ENCODE measurements at regions of chrX and their contacts with region 1.

Region 1: GRCh38 chrX:124211312-124211942 is 121.0 kb upstream of the TEX13D start:
- DNase-seq: peak; percentile 27
- H3K4me3 Mint-ChIP-seq: no peak overlapping the region
- H3K27ac Mint-ChIP-seq: no peak overlapping the region
- H3K4me1 Mint-ChIP-seq: peaks cover 38% of the 10 kb centered on the region
- H3K27me3 Mint-ChIP-seq: no peaks in the 10 kb centered on the region

Region 2: DNA sequence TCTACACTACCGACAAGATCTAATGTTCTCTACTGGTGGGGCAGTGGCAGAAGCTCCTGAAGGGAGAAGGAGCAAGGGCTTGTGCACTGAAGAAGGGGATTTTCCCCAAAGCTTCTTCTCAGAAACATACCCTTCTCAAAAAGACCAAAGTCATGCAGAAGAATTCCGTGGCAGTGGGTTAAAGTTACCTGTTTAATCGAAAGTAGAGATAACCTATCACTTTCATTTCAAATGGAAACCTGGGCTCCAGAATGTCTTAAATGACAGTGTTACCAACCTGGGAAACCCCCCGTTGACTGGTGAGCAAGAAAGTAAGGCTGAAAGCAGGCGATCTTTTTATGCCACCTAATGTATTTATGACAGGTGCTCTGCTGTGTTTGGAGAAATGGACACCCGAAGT is 28.5 kb after region 1 on chrX:
- CTCF ChIA-PET with region 1: interaction called, 7 read pairs
- intact Hi-C with region 1: loop called (anchors 1 kb)
- DNase-seq: peak; percentile 72
- H3K4me3 Mint-ChIP-seq: peak overlapping the region; percentile 15
- H3K27ac Mint-ChIP-seq: peak overlapping the region; percentile 42
- H3K4me1 Mint-ChIP-seq: peaks cover 40% of the 10 kb centered on the region
- H3K27me3 Mint-ChIP-seq: no peaks in the 10 kb centered on the region

Region 3: DNA sequence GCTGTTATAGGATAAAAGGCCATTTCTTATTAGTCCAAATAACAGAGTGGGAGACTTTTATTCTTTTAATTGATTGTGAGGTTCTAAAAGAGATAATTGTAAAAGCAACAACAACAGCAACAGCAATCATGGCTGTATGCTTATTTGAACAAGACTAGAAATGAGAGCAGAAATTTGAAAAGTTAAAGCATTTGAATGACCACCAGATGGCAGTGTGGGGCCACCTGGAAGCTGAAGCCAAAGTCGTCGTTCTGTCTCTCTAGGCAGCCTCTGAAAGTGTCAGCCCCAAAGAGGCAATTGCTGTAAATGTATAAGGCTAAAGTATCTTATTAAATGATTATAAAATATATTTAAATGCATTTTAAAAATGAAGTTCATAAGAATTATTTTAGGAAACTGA is 177.1 kb after region 1 on chrX:
- CTCF ChIA-PET with region 1: interaction called, 4 read pairs
- intact Hi-C with region 1: loop called (anchors 2 kb)
- DNase-seq: peak; percentile 75
- H3K4me3 Mint-ChIP-seq: no peak overlapping the region
- H3K27ac Mint-ChIP-seq: no peak overlapping the region
- H3K4me1 Mint-ChIP-seq: peaks cover 13% of the 10 kb centered on the region
- H3K27me3 Mint-ChIP-seq: no peaks in the 10 kb centered on the region

Region 4: DNA sequence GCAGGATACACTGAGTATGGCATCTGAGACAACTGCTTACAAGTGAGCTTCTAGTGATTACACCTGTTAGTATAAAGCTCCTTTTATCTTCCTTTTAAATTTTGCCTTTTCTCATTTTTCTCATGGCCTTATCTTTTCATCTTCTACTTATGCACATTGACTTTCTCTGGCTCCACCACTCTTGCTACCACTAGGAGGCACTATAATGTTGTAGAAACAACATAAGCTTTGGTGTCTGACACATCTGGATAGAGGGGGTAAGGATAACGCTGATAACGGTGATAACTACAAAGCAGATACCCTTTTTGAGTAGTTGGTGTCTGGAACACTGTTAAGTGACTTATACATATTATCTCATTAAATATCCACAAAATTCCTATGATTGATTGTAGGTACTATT is 920.9 kb after region 1 on chrX:
- CTCF ChIA-PET with region 1: no interaction called
- intact Hi-C with region 1: loop called (anchors 2 kb)
- DNase-seq: peak; percentile 4
- H3K4me3 Mint-ChIP-seq: no peak overlapping the region
- H3K27ac Mint-ChIP-seq: no peak overlapping the region
- H3K4me1 Mint-ChIP-seq: no peaks in the 10 kb centered on the region
- H3K27me3 Mint-ChIP-seq: peaks cover 2% of the 10 kb centered on the region

Region 5: GRCh38 chrX:125205133-125205917 is 993.9 kb after region 1 on chrX:
- CTCF ChIA-PET with region 1: no interaction called
- intact Hi-C with region 1: loop called (anchors 10 kb)
- DNase-seq: peak; percentile 25
- H3K4me3 Mint-ChIP-seq: peak overlapping the region; percentile 69
- H3K27ac Mint-ChIP-seq: no peak overlapping the region
- H3K4me1 Mint-ChIP-seq: peaks cover 13% of the 10 kb centered on the region
- H3K27me3 Mint-ChIP-seq: peaks cover 34% of the 10 kb centered on the region

Region 6: GRCh38 chrX:125295337-125295736 is 1083.9 kb after region 1 on chrX:
- CTCF ChIA-PET with region 1: interaction called, 4 read pairs
- intact Hi-C with region 1: loop called (anchors 10 kb)
- DNase-seq: peak; percentile 8
- H3K4me3 Mint-ChIP-seq: no peak overlapping the region
- H3K27ac Mint-ChIP-seq: peak overlapping the region; percentile 51
- H3K4me1 Mint-ChIP-seq: peaks cover 22% of the 10 kb centered on the region
- H3K27me3 Mint-ChIP-seq: no peaks in the 10 kb centered on the region